ENCODE measurements at regions of chr11 and their contacts with region 1.

Region 1: DNA sequence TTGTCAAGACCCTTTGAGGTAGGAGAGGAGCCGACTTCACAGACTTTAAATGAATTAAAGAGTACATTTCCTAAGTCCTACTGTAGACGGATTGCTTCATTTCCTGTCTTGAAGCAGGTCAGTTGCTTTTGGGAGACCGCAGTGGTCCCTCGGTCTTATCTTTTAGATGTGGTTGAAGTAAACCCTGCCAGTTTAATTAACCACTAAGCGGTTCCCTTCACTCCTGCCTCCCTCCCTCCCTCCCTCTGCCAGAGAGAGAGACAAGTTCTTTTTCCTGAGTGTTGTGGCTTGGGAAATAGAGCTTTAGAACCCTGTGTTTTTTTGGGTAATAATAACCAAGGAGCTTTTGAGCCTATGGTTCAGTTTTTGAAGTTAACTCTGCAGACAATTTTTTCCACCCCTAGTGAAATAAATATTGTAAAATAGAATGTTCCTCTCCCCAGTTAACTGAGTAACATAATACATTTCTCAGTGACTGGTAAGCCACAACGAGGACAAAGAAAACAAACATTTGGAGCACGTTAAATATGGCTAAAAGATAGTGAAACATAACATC is 147.5 kb downstream of the LDLRAD3 start:
- DNase-seq: peak; percentile 79
- ATAC-seq: peak; percentile 69
- H3K4me3 ChIP-seq: no peak overlapping the region
- H3K27ac ChIP-seq: peak overlapping the region; percentile 38
- H3K4me1 ChIP-seq: peaks cover 21% of the 10 kb centered on the region
- H3K27me3 ChIP-seq: no peaks in the 10 kb centered on the region
- CTCF ChIP-seq: no peak
- POLR2A ChIP-seq: no peak
- RAD21 ChIP-seq: no peak

Region 2: DNA sequence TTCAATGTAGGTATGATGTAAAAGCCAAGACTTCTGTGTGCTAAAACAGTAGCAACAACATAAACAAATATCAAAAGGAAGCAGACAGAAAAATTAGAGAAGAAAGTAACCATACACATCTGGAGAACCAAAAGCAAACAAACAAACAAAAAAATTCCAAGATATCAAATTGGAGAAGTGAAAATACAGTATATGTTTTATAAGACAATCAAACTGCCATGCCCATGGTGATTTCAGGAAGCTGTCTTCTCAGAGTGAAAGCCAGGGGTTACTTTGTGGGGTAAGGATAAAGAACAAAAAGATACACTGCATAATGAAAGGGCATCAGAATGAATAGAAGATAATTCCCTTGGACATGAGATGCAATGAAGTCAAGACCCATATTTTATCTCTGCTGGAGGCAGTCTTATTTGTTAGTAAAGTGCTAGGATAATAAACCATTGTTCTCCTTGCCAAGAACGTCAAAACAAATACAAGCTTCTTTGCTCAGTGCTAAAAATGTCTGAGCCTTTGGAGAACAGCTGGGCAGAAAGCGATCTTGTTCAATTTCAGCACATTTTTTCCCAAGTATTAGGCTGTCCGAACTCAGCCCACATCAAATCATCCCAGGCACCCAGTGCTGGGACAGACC is 185.6 kb before region 1 on chr11:
- CTCF ChIA-PET with region 1: no interaction called
- POLR2A ChIA-PET with region 1: no interaction called
- dilution Hi-C with region 1: no loop called
- in situ Hi-C with region 1: no loop called
- intact Hi-C with region 1: no loop called
- DNase-seq: peak; percentile 4
- ATAC-seq: no peak
- H3K4me3 ChIP-seq: no peak overlapping the region
- H3K27ac ChIP-seq: no peak overlapping the region
- H3K4me1 ChIP-seq: no peaks in the 10 kb centered on the region
- H3K27me3 ChIP-seq: peaks cover 2% of the 10 kb centered on the region
- CTCF ChIP-seq: no peak
- POLR2A ChIP-seq: no peak
- RAD21 ChIP-seq: no peak

Region 3: GRCh38 chr11:36048496-36049247 is 42.7 kb before region 1 on chr11:
- CTCF ChIA-PET with region 1: no interaction called
- POLR2A ChIA-PET with region 1: interaction called, 10 read pairs
- dilution Hi-C with region 1: no loop called
- in situ Hi-C with region 1: no loop called
- intact Hi-C with region 1: no loop called
- DNase-seq: peak; percentile 46
- ATAC-seq: peak; percentile 51
- H3K4me3 ChIP-seq: no peak overlapping the region
- H3K27ac ChIP-seq: no peak overlapping the region
- H3K4me1 ChIP-seq: peaks cover 4% of the 10 kb centered on the region; the same call in 1 of the 2 replicates
- H3K27me3 ChIP-seq: no peaks in the 10 kb centered on the region
- CTCF ChIP-seq: no peak
- POLR2A ChIP-seq: no peak
- RAD21 ChIP-seq: no peak

Region 4: GRCh38 chr11:36854875-36855274 is 763.5 kb after region 1 on chr11:
- CTCF ChIA-PET with region 1: no interaction called
- POLR2A ChIA-PET with region 1: no interaction called
- dilution Hi-C with region 1: no loop called
- in situ Hi-C with region 1: no loop called
- intact Hi-C with region 1: no loop called
- DNase-seq: no peak
- ATAC-seq: no peak
- H3K4me3 ChIP-seq: no peak overlapping the region
- H3K27ac ChIP-seq: no peak overlapping the region
- H3K4me1 ChIP-seq: no peaks in the 10 kb centered on the region
- H3K27me3 ChIP-seq: no peaks in the 10 kb centered on the region
- CTCF ChIP-seq: no peak
- POLR2A ChIP-seq: no peak
- RAD21 ChIP-seq: no peak